Activated naive CD4-positive, alpha-beta T cell treated with anti-CD3 and anti-CD28 coated beads for 36 hours (primary cell): ENCODE measurements at regions of chr4 and their contacts with region 1.

Region 1: GRCh38 chr4:119212234-119212963 is at the start of gene USP53:
- DNase-seq: peak; percentile 98
- H3K4me3 Mint-ChIP-seq: peak within 1 kb of the TSS; percentile 90
- H3K27ac Mint-ChIP-seq: peak within 1 kb of the TSS; percentile 92
- H3K4me1 Mint-ChIP-seq: peaks cover 33% of the 10 kb centered on the region
- H3K27me3 Mint-ChIP-seq: no peaks in the 10 kb centered on the region
- total RNA-seq, gene USP53: 8.6 to 9.3 TPM

Region 2: DNA sequence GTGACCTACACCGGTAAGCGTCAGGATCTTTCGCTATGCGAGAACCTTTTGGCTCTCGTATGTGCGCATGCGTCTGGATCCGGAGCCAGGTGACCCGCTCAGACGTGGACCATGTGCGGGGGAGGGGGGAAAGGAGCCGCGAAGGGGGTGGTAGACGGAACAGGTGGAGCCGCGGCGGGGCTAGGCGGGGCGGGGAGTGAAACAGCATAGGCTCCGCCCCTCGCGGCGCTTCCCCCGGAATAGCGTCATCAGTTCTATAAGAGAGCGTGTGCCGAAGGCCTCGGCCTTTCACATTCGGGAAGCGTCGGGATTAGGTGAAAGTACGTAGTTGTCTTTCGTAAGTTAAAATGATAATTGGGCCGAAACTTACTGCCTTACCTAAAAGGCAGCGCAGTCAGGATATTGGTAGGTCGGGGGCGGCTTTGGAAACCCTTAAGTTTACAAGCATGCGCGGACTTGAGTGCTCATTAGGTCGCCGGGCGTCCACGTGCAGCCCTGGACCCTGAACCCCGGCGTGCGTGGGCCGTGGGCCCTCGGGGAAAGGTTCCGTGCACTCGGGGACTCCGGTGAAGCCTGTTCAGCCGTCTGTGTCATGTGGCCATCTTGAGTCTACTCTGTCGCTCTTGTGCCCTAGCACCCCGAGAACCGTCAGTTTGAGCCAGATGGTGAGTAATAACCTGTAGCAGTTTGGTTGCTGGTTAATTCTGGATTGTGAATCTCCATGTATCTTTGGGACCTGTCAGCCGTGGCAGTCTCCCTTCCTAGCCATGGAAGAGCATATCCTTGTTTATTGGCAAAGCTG is 933.7 kb before region 1 on chr4:
- CTCF ChIA-PET with region 1: no interaction called
- intact Hi-C with region 1: loop called (anchors 5 kb)
- DNase-seq: peak; percentile 99
- H3K4me3 Mint-ChIP-seq: peak overlapping the region; percentile 87
- H3K27ac Mint-ChIP-seq: peak overlapping the region; percentile 98
- H3K4me1 Mint-ChIP-seq: peaks cover 24% of the 10 kb centered on the region
- H3K27me3 Mint-ChIP-seq: no peaks in the 10 kb centered on the region

Region 3: GRCh38 chr4:118842055-118842454 is 370.3 kb before region 1 on chr4:
- CTCF ChIA-PET with region 1: no interaction called
- intact Hi-C with region 1: loop called (anchors 1 kb)
- DNase-seq: no peak
- H3K4me3 Mint-ChIP-seq: no peak overlapping the region
- H3K27ac Mint-ChIP-seq: no peak overlapping the region
- H3K4me1 Mint-ChIP-seq: peaks cover 9% of the 10 kb centered on the region
- H3K27me3 Mint-ChIP-seq: no peaks in the 10 kb centered on the region

Region 4: GRCh38 chr4:118941149-118941548 is 271.2 kb before region 1 on chr4:
- CTCF ChIA-PET with region 1: no interaction called
- intact Hi-C with region 1: no loop called
- DNase-seq: no peak
- H3K4me3 Mint-ChIP-seq: no peak overlapping the region
- H3K27ac Mint-ChIP-seq: no peak overlapping the region
- H3K4me1 Mint-ChIP-seq: no peaks in the 10 kb centered on the region
- H3K27me3 Mint-ChIP-seq: peaks cover 2% of the 10 kb centered on the region

Region 5: GRCh38 chr4:118997601-118998000 is 214.8 kb before region 1 on chr4:
- CTCF ChIA-PET with region 1: no interaction called
- intact Hi-C with region 1: no loop called
- DNase-seq: no peak
- H3K4me3 Mint-ChIP-seq: no peak overlapping the region
- H3K27ac Mint-ChIP-seq: no peak overlapping the region
- H3K4me1 Mint-ChIP-seq: no peaks in the 10 kb centered on the region
- H3K27me3 Mint-ChIP-seq: no peaks in the 10 kb centered on the region

Region 6: DNA sequence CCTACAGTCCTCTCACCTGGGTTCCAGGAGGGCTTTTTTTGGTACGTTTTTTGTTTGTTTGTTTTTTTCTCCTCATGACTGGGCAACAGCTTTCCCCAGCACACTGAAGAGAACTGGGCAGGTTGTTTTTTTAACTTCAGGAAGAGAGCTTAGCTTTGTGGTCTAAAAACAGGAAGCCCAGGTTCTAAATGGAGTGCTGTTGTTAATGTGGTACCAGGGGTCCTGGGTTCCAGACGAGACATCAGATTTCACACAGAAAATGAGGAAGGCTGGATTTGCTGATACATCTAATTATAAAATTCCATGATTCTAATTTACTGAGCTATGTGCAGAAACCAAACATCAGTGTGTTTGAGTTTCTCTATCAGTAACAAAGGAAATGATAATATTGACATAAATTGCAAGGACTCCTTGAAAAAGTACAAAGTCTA is 72.6 kb before region 1 on chr4:
- CTCF ChIA-PET with region 1: no interaction called
- intact Hi-C with region 1: loop called (anchors 2 kb)
- DNase-seq: no peak
- H3K4me3 Mint-ChIP-seq: no peak overlapping the region
- H3K27ac Mint-ChIP-seq: peak overlapping the region; percentile 50
- H3K4me1 Mint-ChIP-seq: peaks cover 26% of the 10 kb centered on the region
- H3K27me3 Mint-ChIP-seq: no peaks in the 10 kb centered on the region

Region 7: GRCh38 chr4:119190354-119190753 is 22.0 kb before region 1 on chr4:
- CTCF ChIA-PET with region 1: no interaction called
- intact Hi-C with region 1: no loop called
- DNase-seq: no peak
- H3K4me3 Mint-ChIP-seq: no peak overlapping the region
- H3K27ac Mint-ChIP-seq: no peak overlapping the region
- H3K4me1 Mint-ChIP-seq: no peaks in the 10 kb centered on the region
- H3K27me3 Mint-ChIP-seq: no peaks in the 10 kb centered on the region

Region 8: GRCh38 chr4:119261986-119262385 is 49.6 kb after region 1 on chr4:
- CTCF ChIA-PET with region 1: no interaction called
- intact Hi-C with region 1: loop called (anchors 2 kb)
- DNase-seq: no peak
- H3K4me3 Mint-ChIP-seq: no peak overlapping the region
- H3K27ac Mint-ChIP-seq: no peak overlapping the region
- H3K4me1 Mint-ChIP-seq: peaks cover 17% of the 10 kb centered on the region
- H3K27me3 Mint-ChIP-seq: no peaks in the 10 kb centered on the region

Region 9: DNA sequence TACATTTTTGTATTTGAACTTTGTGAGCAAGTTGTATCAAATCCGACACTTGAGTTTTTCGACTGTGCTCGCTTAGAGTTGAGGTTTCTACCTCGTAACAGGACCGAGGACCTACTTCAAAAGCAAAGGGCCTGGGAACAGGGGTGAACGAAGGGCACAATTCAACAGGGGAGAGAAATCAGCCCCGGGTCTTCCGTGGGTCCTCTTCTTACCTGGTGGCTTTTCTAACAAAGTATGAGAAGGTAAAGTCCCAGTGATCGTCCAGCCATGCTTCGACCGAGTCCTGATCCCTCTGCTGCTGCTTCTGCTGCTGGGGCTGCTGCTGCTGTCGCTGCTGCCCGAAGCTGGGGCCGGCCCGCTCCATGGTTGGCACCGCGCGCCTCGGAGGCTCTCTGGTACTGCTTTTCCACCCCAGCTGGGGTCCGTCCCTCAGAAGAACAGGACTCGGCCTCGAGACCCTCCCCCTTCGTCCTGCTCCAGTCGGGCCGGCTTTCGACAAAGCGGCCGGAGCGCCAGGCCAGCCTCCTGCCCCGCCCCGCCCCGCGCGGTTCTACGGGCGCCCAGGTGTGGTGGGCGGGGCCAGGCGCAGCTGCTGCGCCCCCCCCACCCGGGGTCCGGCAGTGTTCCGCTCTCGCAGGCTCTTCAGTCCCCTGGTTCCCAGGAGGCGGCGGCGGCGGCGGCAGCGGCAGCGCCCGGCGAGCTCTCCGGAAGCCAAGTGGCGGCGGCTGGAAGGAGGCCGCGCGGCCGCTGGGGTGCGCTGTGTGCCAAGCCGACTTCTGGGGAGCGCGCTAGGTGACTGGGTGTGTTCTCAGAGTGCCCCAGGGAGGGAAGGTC is 416.1 kb after region 1 on chr4 and contains the start of gene PDE5A:
- CTCF ChIA-PET with region 1: no interaction called
- intact Hi-C with region 1: loop called (anchors 1 kb)
- DNase-seq: peak; percentile 83
- H3K4me3 Mint-ChIP-seq: peak within 1 kb of the TSS; percentile 78
- H3K27ac Mint-ChIP-seq: no peak within 1 kb of the TSS
- H3K4me1 Mint-ChIP-seq: peaks cover 15% of the 10 kb centered on the region
- H3K27me3 Mint-ChIP-seq: peaks cover 11% of the 10 kb centered on the region
- total RNA-seq, gene PDE5A: 0.41 to 0.44 TPM

Region 10: DNA sequence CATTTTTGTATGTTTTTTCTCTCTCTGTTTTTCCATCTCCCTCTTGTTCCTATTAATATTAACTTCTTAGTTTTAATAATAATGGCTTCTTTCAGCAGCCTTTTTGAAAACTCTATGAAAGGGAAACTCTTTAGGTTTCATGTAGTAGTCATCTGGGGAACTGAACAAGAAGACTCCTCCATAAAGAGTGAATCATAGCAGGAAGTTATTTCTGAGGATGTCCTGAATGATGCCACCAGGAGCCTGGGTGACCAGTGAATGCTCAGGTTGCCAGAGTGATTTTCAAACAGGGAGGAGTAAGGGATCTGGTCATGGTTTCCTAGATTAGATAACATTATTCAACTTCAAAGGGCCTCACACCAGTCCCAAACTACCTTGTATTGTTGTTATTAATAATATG is 629.0 kb after region 1 on chr4:
- CTCF ChIA-PET with region 1: no interaction called
- intact Hi-C with region 1: no loop called
- DNase-seq: no peak
- H3K4me3 Mint-ChIP-seq: no peak overlapping the region
- H3K27ac Mint-ChIP-seq: no peak overlapping the region
- H3K4me1 Mint-ChIP-seq: no peaks in the 10 kb centered on the region
- H3K27me3 Mint-ChIP-seq: no peaks in the 10 kb centered on the region